GM10248 (cell line): ENCODE measurements at regions of chr3 and their contacts with region 1.

Region 1: DNA sequence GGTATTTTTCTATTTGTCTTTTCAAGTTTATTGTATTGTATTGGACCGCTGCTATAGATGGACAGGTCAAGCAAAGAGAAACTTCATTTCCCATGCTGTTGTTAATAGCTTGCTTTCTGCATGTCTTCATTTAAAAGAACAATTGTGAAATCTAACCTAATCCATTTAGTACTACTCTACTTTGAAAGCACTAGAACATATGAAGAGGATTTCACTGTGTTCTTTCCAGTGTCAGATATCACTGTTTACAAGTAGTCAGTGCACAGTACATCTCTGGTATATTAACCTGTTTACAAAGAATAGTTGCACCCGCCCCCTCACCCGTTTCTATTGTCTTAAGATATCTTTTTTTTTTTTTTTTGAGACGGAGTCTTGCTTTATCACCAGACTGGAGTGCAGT is 21.8 kb upstream of the EDEM1 start:
- DNase-seq: no peak
- CTCF ChIP-seq: no peak

Region 2: GRCh38 chr3:5181469-5182141 is 15.9 kb after region 1 on chr3:
- CTCF ChIA-PET with region 1: interaction called, 17 read pairs
- POLR2A ChIA-PET with region 1: no interaction called
- DNase-seq: peak; percentile 40
- CTCF ChIP-seq: no peak

Region 3: GRCh38 chr3:5187156-5187919 is 21.6 kb after region 1 on chr3 and contains the start of gene EDEM1:
- CTCF ChIA-PET with region 1: interaction called, 17 read pairs
- POLR2A ChIA-PET with region 1: no interaction called
- DNase-seq: peak; percentile 98
- CTCF ChIP-seq: no peak

Region 4: DNA sequence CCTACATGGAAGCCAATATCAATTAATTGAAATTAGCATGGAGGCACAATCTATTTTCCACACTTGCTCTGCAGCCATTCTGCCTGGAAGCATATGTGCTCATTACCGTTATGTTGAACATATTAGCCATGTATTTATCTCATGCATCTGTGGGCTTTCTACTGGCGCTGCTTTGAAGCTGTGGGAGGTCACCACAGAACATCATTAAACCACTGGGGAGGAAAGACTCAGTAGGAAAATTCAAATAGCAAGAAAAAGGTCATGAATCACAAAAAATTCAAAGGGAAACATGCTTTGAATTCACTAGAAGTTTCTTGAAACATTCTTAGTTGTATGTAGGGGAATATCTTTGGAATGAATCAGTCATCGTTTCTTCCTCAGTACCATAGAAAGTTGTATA is 674.4 kb after region 1 on chr3:
- CTCF ChIA-PET with region 1: no interaction called
- POLR2A ChIA-PET with region 1: no interaction called
- DNase-seq: no peak
- CTCF ChIP-seq: no peak